HEK293 (cell line): ENCODE measurements at regions of chr9 and their contacts with region 1.

Region 1: GRCh38 chr9:109903515-109904138 is 123.6 kb downstream of the PALM2AKAP2 start:
- H3K4me3 ChIP-seq: no peak overlapping the region
- H3K27ac ChIP-seq: no peak overlapping the region
- H3K4me1 ChIP-seq: no peaks in the 10 kb centered on the region
- CTCF ChIP-seq: peak; percentile 70; the same call in 1 of the 2 replicates

Region 2: DNA sequence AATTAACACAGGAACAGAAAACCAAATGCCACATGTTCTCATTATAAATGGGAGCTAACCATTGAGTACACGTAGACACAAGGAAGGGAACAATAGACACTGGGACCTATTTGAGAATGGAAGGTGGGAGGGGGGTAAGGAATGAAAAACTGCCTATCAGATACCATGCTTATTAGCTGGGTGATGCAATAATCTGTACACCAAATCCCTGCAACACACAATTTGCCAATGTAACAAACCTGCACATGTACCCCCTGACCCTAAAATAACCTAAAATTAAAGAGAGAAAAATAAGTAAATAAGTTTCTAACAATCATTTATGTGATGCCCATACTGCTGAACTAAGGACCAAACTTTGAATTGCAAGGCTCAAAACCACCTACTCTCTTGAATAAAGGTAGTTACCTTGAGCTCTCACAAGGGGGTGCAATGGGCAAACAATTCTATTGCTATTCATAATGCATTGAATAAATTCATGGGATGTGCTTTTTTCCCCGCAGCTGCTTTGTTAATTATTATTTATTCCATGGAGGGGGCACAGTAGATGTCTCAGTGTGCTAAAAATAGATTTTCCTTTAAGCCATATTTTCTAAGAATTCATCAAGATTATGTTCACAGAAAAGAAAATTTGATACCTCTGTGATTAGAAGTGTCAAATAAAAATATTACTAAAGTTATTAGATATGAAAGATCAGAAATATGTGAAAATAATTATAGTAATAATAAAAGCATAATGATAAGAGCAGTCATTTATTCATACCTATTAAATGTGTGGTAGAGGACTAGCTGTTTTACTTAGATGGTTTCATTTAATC is 329.4 kb before region 1 on chr9:
- CTCF ChIA-PET with region 1: interaction called, 23 read pairs
- POLR2A ChIA-PET with region 1: no interaction called
- H3K4me3 ChIP-seq: no peak overlapping the region
- H3K27ac ChIP-seq: no peak overlapping the region
- H3K4me1 ChIP-seq: no peaks in the 10 kb centered on the region
- CTCF ChIP-seq: no peak

Region 3: DNA sequence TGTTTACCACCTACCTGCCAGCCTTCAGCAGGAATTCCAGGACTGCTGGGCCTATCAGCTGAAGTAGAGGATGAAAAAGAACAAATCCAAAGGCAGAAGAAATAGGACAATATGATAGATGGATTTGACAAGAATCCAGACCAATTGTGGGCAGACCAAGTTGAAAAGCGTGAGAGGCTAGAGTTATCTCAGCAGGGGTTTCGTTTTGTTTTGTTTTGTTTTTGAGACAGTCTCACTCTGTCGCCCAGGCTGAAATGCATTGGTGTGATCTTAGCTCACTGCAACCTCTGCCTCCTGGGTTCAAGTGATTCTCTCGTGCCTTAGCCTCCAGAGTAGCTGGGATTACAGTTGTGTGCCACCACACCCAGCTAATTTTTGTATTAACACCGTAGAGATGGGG is 10.4 kb before region 1 on chr9:
- CTCF ChIA-PET with region 1: interaction called, 20 read pairs
- POLR2A ChIA-PET with region 1: no interaction called
- H3K4me3 ChIP-seq: no peak overlapping the region
- H3K27ac ChIP-seq: no peak overlapping the region
- H3K4me1 ChIP-seq: no peaks in the 10 kb centered on the region
- CTCF ChIP-seq: no peak

Region 4: GRCh38 chr9:110058304-110058953 is 154.8 kb after region 1 on chr9:
- CTCF ChIA-PET with region 1: interaction called, 60 read pairs
- POLR2A ChIA-PET with region 1: no interaction called
- H3K4me3 ChIP-seq: no peak overlapping the region
- H3K27ac ChIP-seq: no peak overlapping the region
- H3K4me1 ChIP-seq: no peaks in the 10 kb centered on the region
- CTCF ChIP-seq: peak; percentile 40; the same call in 1 of the 2 replicates

Region 5: DNA sequence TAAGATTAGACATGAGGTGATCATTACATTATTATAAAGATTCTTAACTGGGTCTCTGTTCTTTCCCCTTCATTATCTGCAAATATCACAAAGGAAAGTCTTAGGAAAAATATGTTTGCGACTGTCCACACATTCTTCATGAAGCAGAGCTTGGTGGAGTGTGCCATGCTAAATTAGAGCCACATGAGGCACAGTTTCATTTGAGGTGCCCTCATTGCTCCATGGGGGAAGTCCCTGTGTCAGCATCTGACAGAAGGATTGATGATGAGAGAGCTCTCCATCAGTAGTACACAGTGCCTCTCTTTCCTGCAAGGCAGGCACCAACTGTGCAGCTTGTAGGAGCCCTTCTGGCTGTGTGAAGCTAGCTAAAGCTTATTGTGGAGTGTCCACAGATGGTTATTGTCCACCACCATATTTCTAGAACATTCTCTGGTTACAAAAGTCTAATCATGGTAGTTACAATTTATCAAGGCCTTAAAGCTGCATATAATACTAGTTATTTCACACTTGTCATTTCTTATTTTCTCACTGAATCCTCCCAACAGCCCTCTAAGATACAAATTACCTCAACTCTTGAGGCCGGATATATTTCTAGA is 240.4 kb after region 1 on chr9:
- CTCF ChIA-PET with region 1: interaction called, 122 read pairs
- POLR2A ChIA-PET with region 1: no interaction called
- H3K4me3 ChIP-seq: no peak overlapping the region
- H3K27ac ChIP-seq: no peak overlapping the region
- H3K4me1 ChIP-seq: no peaks in the 10 kb centered on the region
- CTCF ChIP-seq: no peak

Region 6: GRCh38 chr9:110152704-110153374 is 249.2 kb after region 1 on chr9:
- CTCF ChIA-PET with region 1: interaction called, 122 read pairs
- POLR2A ChIA-PET with region 1: no interaction called
- H3K4me3 ChIP-seq: no peak overlapping the region
- H3K27ac ChIP-seq: no peak overlapping the region
- H3K4me1 ChIP-seq: no peaks in the 10 kb centered on the region
- CTCF ChIP-seq: peak; percentile 42; the same call in 1 of the 2 replicates

Region 7: GRCh38 chr9:110241260-110241857 is 337.7 kb after region 1 on chr9:
- CTCF ChIA-PET with region 1: no interaction called
- POLR2A ChIA-PET with region 1: no interaction called
- H3K4me3 ChIP-seq: no peak overlapping the region
- H3K27ac ChIP-seq: no peak overlapping the region
- H3K4me1 ChIP-seq: no peaks in the 10 kb centered on the region
- CTCF ChIP-seq: no peak